A549 (cell line): ENCODE measurements at regions of chr17 and their contacts with region 1.

Region 1: GRCh38 chr17:51153210-51154072 is at the start of gene NME1:
- DNase-seq: peak; percentile 99 to 100
- ATAC-seq: peak; percentile 96 to 98
- H3K4me3 ChIP-seq: peak within 1 kb of the TSS; percentile 74
- H3K27ac ChIP-seq: peak within 1 kb of the TSS; percentile 82 to 88
- H3K4me1 ChIP-seq: peaks cover 25% of the 10 kb centered on the region
- CTCF ChIP-seq: peak; percentile 98
- EP300 ChIP-seq: no peak
- POLR2A ChIP-seq: peak; percentile 77
- RAD21 ChIP-seq: peak; percentile 99
- polyA plus RNA-seq, gene NME1: 639 and 782 TPM in 2 replicates

Region 2: DNA sequence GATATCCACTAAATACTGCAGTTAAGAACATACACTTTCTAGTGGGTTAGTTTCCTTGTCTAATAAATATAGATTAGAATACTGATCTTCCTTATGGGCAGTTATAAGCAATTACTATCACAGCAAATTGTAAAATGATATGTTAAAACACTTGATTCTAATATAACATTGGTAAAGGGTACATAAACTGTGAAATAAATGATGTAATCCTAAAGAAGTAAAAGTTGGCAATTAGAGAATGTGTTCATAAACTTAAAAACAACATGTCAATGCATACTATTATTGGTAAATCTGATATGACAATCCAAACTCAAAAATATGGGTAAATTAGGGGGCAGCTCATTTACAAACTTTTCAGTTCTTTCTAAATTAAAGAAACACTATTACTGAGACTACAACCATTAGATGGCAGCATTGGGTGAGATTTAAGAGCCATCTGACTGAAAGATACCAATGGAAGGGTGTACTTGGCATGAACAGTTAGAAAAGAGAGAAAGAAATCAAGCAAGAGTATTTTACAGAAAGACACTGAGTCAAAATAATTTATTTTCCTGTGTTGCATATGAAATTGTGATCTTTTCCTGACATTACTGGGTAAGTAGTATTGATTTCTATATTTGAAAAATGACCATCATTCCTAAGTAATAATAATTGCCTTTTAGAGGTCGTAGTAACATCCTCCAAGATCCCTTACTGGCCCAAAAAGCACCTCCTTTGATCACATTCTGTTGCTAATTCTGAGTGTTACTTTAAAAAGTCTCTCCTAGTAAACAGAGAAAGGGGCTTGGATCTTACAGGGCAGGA is 152.4 kb before region 1 on chr17:
- CTCF ChIA-PET with region 1: interaction called, 202 read pairs
- POLR2A ChIA-PET with region 1: interaction called, 7 read pairs
- DNase-seq: peak; percentile 62 to 78
- ATAC-seq: peak; percentile 86 to 91; a peak in 5 of 6 replicates
- H3K4me3 ChIP-seq: no peak overlapping the region
- H3K27ac ChIP-seq: no peak overlapping the region
- H3K4me1 ChIP-seq: no peaks in the 10 kb centered on the region
- CTCF ChIP-seq: peak; percentile 84
- EP300 ChIP-seq: no peak
- POLR2A ChIP-seq: no peak
- RAD21 ChIP-seq: peak; percentile 86 to 89

Region 3: GRCh38 chr17:51046514-51047384 is 106.7 kb before region 1 on chr17:
- CTCF ChIA-PET with region 1: interaction called, 22 read pairs
- POLR2A ChIA-PET with region 1: no interaction called
- DNase-seq: peak in 1 of 2 experiments; percentile 26
- ATAC-seq: peak; percentile 43 to 75; a peak in 5 of 6 replicates
- H3K4me3 ChIP-seq: no peak overlapping the region
- H3K27ac ChIP-seq: no peak overlapping the region
- H3K4me1 ChIP-seq: peaks cover 9% of the 10 kb centered on the region; the same call in 2 of the 3 replicates
- CTCF ChIP-seq: no peak
- EP300 ChIP-seq: no peak
- POLR2A ChIP-seq: no peak
- RAD21 ChIP-seq: no peak

Region 4: GRCh38 chr17:51079049-51079448 is 74.4 kb before region 1 on chr17:
- CTCF ChIA-PET with region 1: interaction called, 15 read pairs
- POLR2A ChIA-PET with region 1: no interaction called
- DNase-seq: no peak
- ATAC-seq: no peak
- H3K4me3 ChIP-seq: no peak overlapping the region
- H3K27ac ChIP-seq: 0 out of 6 replicates have a peak overlapping the region, but pooled peaks of 1 of the 2 experiments have one; percentile 3
- H3K4me1 ChIP-seq: peaks cover 8% of the 10 kb centered on the region
- CTCF ChIP-seq: no peak
- EP300 ChIP-seq: no peak
- POLR2A ChIP-seq: no peak
- RAD21 ChIP-seq: no peak

Region 5: GRCh38 chr17:51120739-51121617 is 32.5 kb before region 1 on chr17 and contains the start of gene SPAG9:
- CTCF ChIA-PET with region 1: interaction called, 119 read pairs
- POLR2A ChIA-PET with region 1: interaction called, 41 read pairs
- DNase-seq: peak; percentile 97
- ATAC-seq: peak; percentile 80 to 82
- H3K4me3 ChIP-seq: peak within 1 kb of the TSS; percentile 77
- H3K27ac ChIP-seq: peak within 1 kb of the TSS; percentile 91 to 92
- H3K4me1 ChIP-seq: peaks cover 46% of the 10 kb centered on the region
- CTCF ChIP-seq: no peak
- EP300 ChIP-seq: no peak
- POLR2A ChIP-seq: peak; percentile 46
- RAD21 ChIP-seq: peak; percentile 4 to 5; a peak in 1 of 5 replicates
- polyA plus RNA-seq, gene SPAG9: 69.6 and 71.1 TPM in 2 replicates